ENCODE measurements at regions of chr10 and their contacts with region 1.

Region 1: GRCh38 chr10:69269761-69270160 is 8.5 kb upstream of the HK1 start:
- DNase-seq: no peak
- ATAC-seq: no peak
- H3K4me3 ChIP-seq: no peak overlapping the region
- H3K27ac ChIP-seq: no peak overlapping the region
- H3K4me1 ChIP-seq: no peaks in the 10 kb centered on the region
- H3K27me3 ChIP-seq: no peaks in the 10 kb centered on the region
- CTCF ChIP-seq: no peak
- POLR2A ChIP-seq: no peak

Region 2: GRCh38 chr10:69312533-69312932 is 42.8 kb after region 1 on chr10:
- intact Hi-C with region 1: loop called in 1 of 10 experiments (anchors 5 kb)
- DNase-seq: no peak
- ATAC-seq: no peak
- H3K4me3 ChIP-seq: no peak overlapping the region
- H3K27ac ChIP-seq: no peak overlapping the region
- H3K4me1 ChIP-seq: peaks cover 0 to 21% (median 9%) of the 10 kb centered on the region in 12 donors
- H3K27me3 ChIP-seq: no peaks in the 10 kb centered on the region
- CTCF ChIP-seq: no peak
- POLR2A ChIP-seq: no peak